CD8-positive, alpha-beta memory T cell (primary cell): ENCODE measurements at regions of chr12 and their contacts with region 1.

Region 1: GRCh38 chr12:109775172-109775881 is 57.9 kb downstream of the TRPV4 start:
- DNase-seq: peak; percentile 49 to 78 (median 63)
- H3K4me3 ChIP-seq: no peak overlapping the region
- H3K4me3 Mint-ChIP-seq: peak overlapping the region in 1 of 7 donors; percentile 44
- H3K27ac ChIP-seq: no peak overlapping the region
- H3K27ac Mint-ChIP-seq: peak overlapping the region in 1 of 8 donors; percentile 54
- H3K4me1 ChIP-seq: no peaks in the 10 kb centered on the region
- H3K4me1 Mint-ChIP-seq: peaks cover 6 to 16% (median 6%) of the 10 kb centered on the region in 3 donors
- H3K27me3 ChIP-seq: no peaks in the 10 kb centered on the region
- H3K27me3 Mint-ChIP-seq: peaks cover 4 to 11% of the 10 kb centered on the region in 2 donors

Region 2: DNA sequence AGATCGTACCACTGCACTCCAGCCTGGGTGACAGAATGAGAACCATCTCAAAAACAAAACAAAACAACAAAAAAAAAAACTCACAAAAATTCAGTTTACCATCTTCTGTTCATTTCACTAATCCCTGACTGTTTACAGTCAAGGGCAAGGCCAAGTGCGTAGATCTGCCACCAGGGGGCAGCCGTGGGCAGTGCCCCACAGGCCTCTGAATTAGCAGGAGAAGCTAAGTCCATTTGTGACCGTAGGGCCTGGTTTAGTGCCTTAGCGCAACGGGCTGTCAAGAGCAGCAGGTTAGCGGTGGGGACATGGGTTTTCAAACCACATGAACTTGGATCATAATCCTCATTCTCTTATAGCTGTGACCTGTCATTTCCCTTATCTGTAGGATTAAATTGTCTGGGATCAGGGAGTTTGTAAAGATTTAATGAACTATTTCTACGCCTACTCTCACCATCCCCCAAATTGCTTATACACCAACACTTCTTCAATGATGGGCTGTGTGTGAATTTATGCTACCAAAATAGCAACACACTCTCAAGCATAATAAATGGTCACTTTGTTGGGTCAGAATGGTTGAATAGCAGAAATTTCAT is 347.2 kb before region 1 on chr12:
- CTCF ChIA-PET with region 1: interaction called, 13 read pairs
- POLR2A ChIA-PET with region 1: no interaction called
- DNase-seq: peak; percentile 51 to 79 (median 63)
- H3K4me3 ChIP-seq: no peak overlapping the region
- H3K4me3 Mint-ChIP-seq: no peak overlapping the region
- H3K27ac ChIP-seq: no peak overlapping the region
- H3K27ac Mint-ChIP-seq: no peak overlapping the region
- H3K4me1 ChIP-seq: no peaks in the 10 kb centered on the region
- H3K4me1 Mint-ChIP-seq: peaks cover 5 to 6% (median 6%) of the 10 kb centered on the region in 3 donors
- H3K27me3 ChIP-seq: no peaks in the 10 kb centered on the region
- H3K27me3 Mint-ChIP-seq: peaks cover 19 to 34% of the 10 kb centered on the region in 2 donors

Region 3: DNA sequence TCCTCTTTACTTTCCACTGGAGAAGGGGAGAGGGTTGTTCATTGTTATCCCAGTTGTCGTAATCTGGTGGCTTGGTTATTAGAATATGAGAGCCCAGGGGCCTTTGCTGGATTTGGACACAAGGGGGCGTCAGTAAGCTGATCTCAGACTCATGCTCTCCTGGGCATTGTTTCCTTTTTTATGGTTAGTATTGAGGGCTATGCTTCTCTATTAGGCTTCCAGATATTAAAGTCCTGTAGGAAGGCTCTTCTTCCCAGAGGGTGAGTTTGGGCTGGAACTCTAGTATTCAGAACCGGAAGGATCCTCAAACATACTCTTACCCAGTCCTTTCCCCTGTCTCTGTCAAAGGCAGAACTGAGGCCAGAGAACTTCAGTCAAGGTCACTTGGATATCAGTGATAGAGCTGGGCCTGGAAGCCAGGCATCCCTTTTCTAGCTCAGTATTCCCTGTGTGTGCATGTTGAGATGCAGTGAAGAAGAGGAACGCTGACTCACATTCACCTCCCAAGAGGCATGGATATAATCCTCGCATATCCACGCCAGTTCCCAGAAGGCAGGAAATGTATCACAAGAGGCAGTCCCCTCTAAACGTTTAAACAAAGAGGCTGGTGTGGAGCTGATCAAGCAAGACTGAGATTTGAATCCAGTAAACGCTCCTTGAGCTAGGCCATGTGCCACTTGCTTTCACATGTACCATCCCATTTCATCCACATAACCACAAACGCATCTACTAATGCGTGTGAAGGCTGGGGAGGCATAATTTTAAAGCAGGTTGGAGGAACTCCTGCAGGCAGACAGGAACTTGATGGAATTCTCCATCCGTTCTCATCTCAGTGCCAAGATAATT is 256.3 kb before region 1 on chr12:
- CTCF ChIA-PET with region 1: interaction called, 26 read pairs
- POLR2A ChIA-PET with region 1: no interaction called
- DNase-seq: peak; percentile 33 to 66 (median 42)
- H3K4me3 ChIP-seq: no peak overlapping the region
- H3K4me3 Mint-ChIP-seq: no peak overlapping the region
- H3K27ac ChIP-seq: no peak overlapping the region
- H3K27ac Mint-ChIP-seq: peak overlapping the region in 4 of 8 donors; percentile 7 to 78 (median 53)
- H3K4me1 ChIP-seq: no peaks in the 10 kb centered on the region
- H3K4me1 Mint-ChIP-seq: peaks cover 0 to 5% (median 0%) of the 10 kb centered on the region in 3 donors
- H3K27me3 ChIP-seq: no peaks in the 10 kb centered on the region
- H3K27me3 Mint-ChIP-seq: peaks cover 0 to 2% of the 10 kb centered on the region in 2 donors

Region 4: GRCh38 chr12:109670731-109671130 is 104.6 kb before region 1 on chr12:
- CTCF ChIA-PET with region 1: no interaction called
- POLR2A ChIA-PET with region 1: no interaction called
- DNase-seq: no peak
- H3K4me3 ChIP-seq: no peak overlapping the region
- H3K4me3 Mint-ChIP-seq: no peak overlapping the region
- H3K27ac ChIP-seq: no peak overlapping the region
- H3K27ac Mint-ChIP-seq: no peak overlapping the region
- H3K4me1 ChIP-seq: no peaks in the 10 kb centered on the region
- H3K4me1 Mint-ChIP-seq: no peaks in the 10 kb centered on the region
- H3K27me3 ChIP-seq: peaks cover 4% of the 10 kb centered on the region
- H3K27me3 Mint-ChIP-seq: peaks cover 7 to 24% of the 10 kb centered on the region in 2 donors

Region 5: GRCh38 chr12:109695961-109696461 is 79.3 kb before region 1 on chr12:
- CTCF ChIA-PET with region 1: no interaction called
- POLR2A ChIA-PET with region 1: no interaction called
- DNase-seq: no peak
- H3K4me3 ChIP-seq: no peak overlapping the region
- H3K4me3 Mint-ChIP-seq: no peak overlapping the region
- H3K27ac ChIP-seq: no peak overlapping the region
- H3K27ac Mint-ChIP-seq: no peak overlapping the region
- H3K4me1 ChIP-seq: no peaks in the 10 kb centered on the region
- H3K4me1 Mint-ChIP-seq: no peaks in the 10 kb centered on the region
- H3K27me3 ChIP-seq: no peaks in the 10 kb centered on the region
- H3K27me3 Mint-ChIP-seq: peaks cover 17 to 28% of the 10 kb centered on the region in 2 donors

Region 6: DNA sequence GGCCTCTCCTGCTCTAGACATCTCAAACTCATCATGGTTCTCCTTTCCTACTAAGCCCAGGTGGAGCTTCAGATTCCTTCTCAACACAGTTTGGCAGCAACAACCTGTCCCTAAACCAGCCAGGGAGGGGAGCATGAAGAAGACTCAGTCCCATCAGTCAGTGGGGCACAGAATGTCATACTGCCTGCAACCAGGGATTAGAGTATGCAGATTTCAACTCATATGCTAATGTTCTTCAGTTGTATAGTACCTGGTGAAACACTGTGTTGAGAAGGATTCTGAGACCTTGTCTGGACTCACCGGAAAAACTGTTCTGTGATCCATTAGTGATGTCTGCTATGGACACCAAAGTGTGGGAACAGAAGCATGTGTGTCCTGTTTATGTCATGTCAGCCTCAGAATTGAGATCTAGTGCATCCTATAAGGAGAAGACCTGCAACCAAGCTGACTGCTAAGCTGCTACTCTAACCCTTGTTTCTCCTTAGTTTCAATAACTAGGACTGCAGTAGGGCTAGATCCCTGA is 14.3 kb after region 1 on chr12:
- CTCF ChIA-PET with region 1: no interaction called
- POLR2A ChIA-PET with region 1: no interaction called
- DNase-seq: no peak
- H3K4me3 ChIP-seq: no peak overlapping the region
- H3K4me3 Mint-ChIP-seq: peak overlapping the region in 1 of 7 donors; percentile 40
- H3K27ac ChIP-seq: no peak overlapping the region
- H3K27ac Mint-ChIP-seq: no peak overlapping the region
- H3K4me1 ChIP-seq: no peaks in the 10 kb centered on the region
- H3K4me1 Mint-ChIP-seq: no peaks in the 10 kb centered on the region
- H3K27me3 ChIP-seq: no peaks in the 10 kb centered on the region
- H3K27me3 Mint-ChIP-seq: peaks cover 9 to 42% of the 10 kb centered on the region in 2 donors